ENCODE measurements at regions of chr3 and their contacts with region 1.

Region 1: DNA sequence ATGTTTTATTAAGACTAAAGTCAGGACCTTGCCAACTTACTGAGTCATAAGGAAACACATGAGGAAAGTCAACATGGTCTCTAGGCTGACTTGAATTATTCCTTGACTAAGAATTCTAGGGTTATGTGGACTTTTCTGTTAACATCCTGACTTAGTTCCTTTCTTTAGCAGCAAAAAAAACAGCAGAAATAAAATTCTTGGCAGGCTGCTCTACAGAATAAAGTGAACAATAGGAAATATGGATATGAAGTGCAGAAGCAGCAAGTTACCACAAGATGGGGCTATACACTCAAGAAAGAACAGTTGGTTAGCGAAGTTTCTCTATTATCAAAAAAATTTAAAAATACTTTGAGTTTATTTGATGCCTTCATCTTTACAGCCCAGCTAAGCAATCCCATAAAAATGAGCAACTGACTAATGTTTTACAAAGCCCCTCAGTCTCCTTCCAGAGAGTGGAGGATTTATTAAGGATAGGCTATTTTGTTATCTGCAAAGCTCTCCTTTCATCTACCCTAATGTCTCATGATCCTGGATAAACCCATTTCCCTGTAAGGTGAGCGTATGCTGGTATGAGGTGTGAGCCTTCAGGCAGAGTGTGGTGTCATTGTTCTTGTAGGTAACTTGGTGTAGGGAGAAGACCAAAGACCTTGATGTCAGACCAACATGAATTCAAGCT is 23.1 kb upstream of the MCCC1 start:
- DNase-seq: peak; percentile 31 to 68 (median 51)
- H3K4me3 ChIP-seq: no peak overlapping the region
- H3K4me3 Mint-ChIP-seq: no peak overlapping the region
- H3K27ac ChIP-seq: no peak overlapping the region
- H3K27ac Mint-ChIP-seq: no peak overlapping the region
- H3K4me1 ChIP-seq: no peaks in the 10 kb centered on the region
- H3K4me1 Mint-ChIP-seq: no peaks in the 10 kb centered on the region
- H3K27me3 ChIP-seq: peaks cover 0 to under 1% of the 10 kb centered on the region in 2 donors
- H3K27me3 Mint-ChIP-seq: peaks cover 6 to 8% (median 7%) of the 10 kb centered on the region in 3 donors
- CTCF ChIP-seq: peak; percentile 90

Region 2: GRCh38 chr3:183180105-183180783 is 57.8 kb after region 1 on chr3:
- intact Hi-C with region 1: loop called (anchors 5 kb)
- DNase-seq: no peak
- H3K4me3 ChIP-seq: peak overlapping the region in 1 of 3 experiments; percentile 71
- H3K4me3 Mint-ChIP-seq: peak overlapping the region in 1 of 2 donors; percentile 94
- H3K27ac ChIP-seq: no peak overlapping the region
- H3K27ac Mint-ChIP-seq: no peak overlapping the region
- H3K4me1 ChIP-seq: peaks cover 23 to 25% of the 10 kb centered on the region in 2 donors
- H3K4me1 Mint-ChIP-seq: peaks cover 22% of the 10 kb centered on the region
- H3K27me3 ChIP-seq: peaks cover 18 to 48% of the 10 kb centered on the region in 2 donors
- H3K27me3 Mint-ChIP-seq: peaks cover 46 to 64% (median 60%) of the 10 kb centered on the region in 3 donors
- CTCF ChIP-seq: no peak

Region 3: DNA sequence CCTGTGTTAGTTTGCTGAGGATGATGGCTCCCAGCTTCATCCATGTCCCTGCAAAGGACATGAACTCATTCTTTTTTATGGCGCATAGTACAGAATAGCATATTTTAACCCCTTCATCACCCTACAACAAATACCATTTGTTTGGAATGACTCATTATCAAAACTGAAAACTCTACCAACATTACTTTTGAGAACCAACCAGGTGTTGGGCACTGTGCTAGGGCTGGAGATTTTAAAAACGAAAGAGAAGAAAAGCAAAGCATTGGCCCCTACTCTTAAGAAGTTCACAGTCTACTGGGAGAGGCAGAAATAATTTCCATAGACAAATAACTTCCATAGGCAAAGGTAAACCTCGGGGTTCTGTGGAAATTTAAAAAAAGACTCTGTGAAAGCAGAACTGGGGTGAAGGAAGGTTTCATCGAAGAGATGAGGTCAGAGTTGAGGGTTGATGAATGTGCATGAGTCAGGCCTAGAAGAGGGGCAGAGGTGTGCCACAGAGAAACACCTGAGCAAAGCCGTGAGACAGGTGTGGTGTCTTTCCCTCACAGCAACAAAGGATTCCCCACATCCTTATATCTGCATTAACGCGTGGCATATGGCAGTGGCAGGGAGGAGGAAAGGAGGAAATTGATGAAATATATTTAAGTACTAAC is 255.0 kb after region 1 on chr3:
- intact Hi-C with region 1: loop called in 1 of 2 experiments (anchors 2 kb)
- DNase-seq: peak in 2 of 3 donors; percentile 45 to 51
- H3K4me3 ChIP-seq: no peak overlapping the region
- H3K4me3 Mint-ChIP-seq: no peak overlapping the region
- H3K27ac ChIP-seq: no peak overlapping the region
- H3K27ac Mint-ChIP-seq: peak overlapping the region in 5 of 7 donors; percentile 23 to 51 (median 33)
- H3K4me1 ChIP-seq: peaks cover 52 to 74% of the 10 kb centered on the region in 2 donors
- H3K4me1 Mint-ChIP-seq: peaks cover 66% of the 10 kb centered on the region
- H3K27me3 ChIP-seq: no peaks in the 10 kb centered on the region
- H3K27me3 Mint-ChIP-seq: peaks cover 0 to 3% (median 2%) of the 10 kb centered on the region in 3 donors
- CTCF ChIP-seq: no peak

Region 4: GRCh38 chr3:183385698-183386613 is 263.6 kb after region 1 on chr3:
- intact Hi-C with region 1: loop called (anchors 2 kb)
- DNase-seq: peak; percentile 68 to 81 (median 80)
- H3K4me3 ChIP-seq: no peak overlapping the region
- H3K4me3 Mint-ChIP-seq: no peak overlapping the region
- H3K27ac ChIP-seq: no peak overlapping the region
- H3K27ac Mint-ChIP-seq: peak overlapping the region in 2 of 7 donors; percentile 16 to 30
- H3K4me1 ChIP-seq: peaks cover 16 to 19% of the 10 kb centered on the region in 2 donors
- H3K4me1 Mint-ChIP-seq: peaks cover 19% of the 10 kb centered on the region
- H3K27me3 ChIP-seq: no peaks in the 10 kb centered on the region
- H3K27me3 Mint-ChIP-seq: peaks cover 0 to 2% (median 0%) of the 10 kb centered on the region in 3 donors
- CTCF ChIP-seq: peak; percentile 78

Measured in CD14-positive monocyte (primary cell).